ENCODE measurements at regions of chr3 and their contacts with region 1.

Region 1: DNA sequence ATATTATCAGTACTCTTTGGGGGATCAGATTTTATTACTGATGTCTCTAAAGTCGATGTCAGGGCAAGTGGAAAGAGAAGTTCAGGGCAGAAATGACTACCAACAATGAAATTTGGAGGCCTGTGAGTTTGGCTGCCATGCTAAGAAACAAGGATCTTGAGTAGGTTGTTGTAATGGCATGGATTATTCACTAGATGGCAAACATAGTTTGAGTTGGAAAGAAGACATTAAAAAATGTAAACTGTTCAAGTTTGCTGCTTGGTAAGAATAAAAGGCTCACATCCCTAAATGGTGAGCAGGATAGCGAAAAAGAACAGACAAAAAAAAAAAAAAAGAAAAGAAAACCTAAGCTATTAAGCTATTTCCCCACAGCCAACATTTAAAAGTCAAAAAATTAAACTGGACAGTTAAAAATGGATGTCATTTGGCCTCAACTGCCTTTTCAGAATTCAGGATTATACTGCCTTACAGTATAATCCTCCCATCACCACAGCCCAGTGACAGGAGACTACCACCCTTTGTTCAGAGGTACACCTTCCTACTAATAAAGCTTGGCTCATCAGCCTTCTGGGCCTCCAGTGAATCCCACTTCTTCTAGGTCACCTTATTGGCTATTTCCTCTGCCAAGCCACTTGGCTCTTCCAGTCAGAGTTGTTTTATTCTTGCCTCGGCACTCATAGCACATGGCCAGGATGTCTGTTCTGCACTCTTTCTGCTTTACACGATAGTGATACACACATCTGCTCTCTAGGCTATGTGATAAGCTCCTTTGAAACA is 163.7 kb downstream of the PLD1 start:
- DNase-seq: no peak
- H3K4me3 ChIP-seq: no peak overlapping the region
- H3K27ac ChIP-seq: peak overlapping the region in 2 of 4 donors; percentile 47 to 58
- H3K4me1 ChIP-seq: peaks cover 0 to 5% (median 0%) of the 10 kb centered on the region in 4 donors
- H3K27me3 ChIP-seq: no peaks in the 10 kb centered on the region
- CTCF ChIP-seq: peak; percentile 57 to 68 (median 63)
- EP300 ChIP-seq: no peak
- POLR2A ChIP-seq: no peak

Region 2: DNA sequence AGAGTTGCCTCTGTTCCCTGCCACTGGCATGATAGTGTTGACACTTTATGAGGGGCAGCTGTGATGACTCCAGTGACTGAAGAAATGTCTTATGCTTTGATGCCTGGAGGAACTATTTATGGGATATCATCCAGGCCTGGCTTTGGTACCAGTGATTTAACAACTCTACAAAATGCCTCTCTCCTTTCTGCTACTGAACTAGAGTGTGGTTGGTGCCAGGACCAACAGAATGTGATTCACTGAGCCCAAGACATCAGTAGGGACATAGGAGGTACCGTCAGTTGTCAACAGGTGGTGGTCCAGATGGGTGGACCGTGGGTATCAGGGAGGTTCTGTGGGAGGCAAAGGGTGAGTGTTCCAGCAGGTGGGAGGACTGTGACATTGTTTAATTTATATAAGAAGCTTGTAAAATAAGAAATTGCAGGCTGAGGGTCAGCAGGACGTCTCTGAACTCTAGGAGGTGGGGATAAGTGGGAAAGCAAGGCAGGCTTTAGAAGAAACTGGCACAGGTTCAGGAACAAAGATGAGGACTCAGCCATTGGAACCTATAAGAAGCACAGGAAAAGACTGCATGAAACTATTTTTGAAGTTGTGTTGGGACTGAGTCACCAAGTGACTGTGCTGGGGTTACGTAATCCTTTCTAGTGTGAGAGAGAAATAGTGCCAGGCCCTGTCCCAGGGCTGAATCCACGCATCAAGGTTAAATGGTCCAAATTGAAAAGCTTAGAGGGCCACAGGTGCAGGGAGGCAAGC is 1032.2 kb before region 1 on chr3:
- in situ Hi-C with region 1: no loop called
- intact Hi-C with region 1: no loop called
- DNase-seq: no peak
- H3K4me3 ChIP-seq: no peak overlapping the region
- H3K27ac ChIP-seq: no peak overlapping the region
- H3K4me1 ChIP-seq: no peaks in the 10 kb centered on the region
- H3K27me3 ChIP-seq: no peaks in the 10 kb centered on the region
- CTCF ChIP-seq: no peak
- EP300 ChIP-seq: no peak
- POLR2A ChIP-seq: no peak

Region 3: DNA sequence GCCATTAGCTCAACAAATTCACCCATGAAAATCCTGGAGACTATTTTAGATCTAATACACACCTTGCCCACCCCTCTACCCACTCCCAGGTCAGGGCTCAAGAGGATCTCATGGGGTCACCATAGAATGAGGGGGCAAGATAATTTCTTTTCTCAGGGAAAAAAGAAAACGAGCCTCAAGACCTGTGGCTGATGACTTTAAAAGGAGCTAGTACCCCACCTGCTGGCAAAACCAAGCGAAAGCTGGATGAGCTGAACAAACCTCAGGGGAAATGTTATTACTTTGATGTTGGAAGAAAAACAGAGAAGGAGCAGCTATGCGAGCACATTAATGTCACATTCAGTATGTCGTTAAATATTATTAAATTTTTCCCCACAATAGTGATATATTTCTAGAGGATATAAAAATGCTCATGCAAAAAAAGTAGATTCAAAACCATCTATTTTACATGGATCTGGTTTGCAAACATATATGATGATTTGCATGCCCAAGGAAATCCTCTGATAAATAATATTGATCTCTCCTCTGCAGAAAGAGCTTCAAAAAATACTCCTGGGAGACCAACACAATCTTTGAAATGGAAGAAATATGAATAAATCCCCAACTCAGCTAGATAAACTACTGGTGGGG is 126.0 kb after region 1 on chr3:
- in situ Hi-C with region 1: loop called in 1 of 4 experiments (anchors 10 kb)
- intact Hi-C with region 1: loop called (anchors 10 kb)
- DNase-seq: peak; percentile 61
- H3K4me3 ChIP-seq: no peak overlapping the region
- H3K27ac ChIP-seq: no peak overlapping the region
- H3K4me1 ChIP-seq: peaks cover 0 to 55% (median 22%) of the 10 kb centered on the region in 4 donors
- H3K27me3 ChIP-seq: no peaks in the 10 kb centered on the region
- CTCF ChIP-seq: peak; percentile 60 to 70 (median 61)
- EP300 ChIP-seq: no peak
- POLR2A ChIP-seq: no peak

Region 4: GRCh38 chr3:171829841-171830517 is 183.4 kb after region 1 on chr3:
- in situ Hi-C with region 1: loop called in 1 of 4 experiments (anchors 25 kb)
- intact Hi-C with region 1: no loop called
- DNase-seq: peak; percentile 72
- H3K4me3 ChIP-seq: no peak overlapping the region
- H3K27ac ChIP-seq: peak overlapping the region; percentile 3 to 42 (median 34)
- H3K4me1 ChIP-seq: peaks cover 0 to 32% (median 6%) of the 10 kb centered on the region in 4 donors
- H3K27me3 ChIP-seq: no peaks in the 10 kb centered on the region
- CTCF ChIP-seq: peak; percentile 55 to 74 (median 67)
- EP300 ChIP-seq: no peak
- POLR2A ChIP-seq: no peak

Measured in transverse colon (tissue), 4 donors.